ENCODE measurements at regions of chr3 and their contacts with region 1.

Region 1: DNA sequence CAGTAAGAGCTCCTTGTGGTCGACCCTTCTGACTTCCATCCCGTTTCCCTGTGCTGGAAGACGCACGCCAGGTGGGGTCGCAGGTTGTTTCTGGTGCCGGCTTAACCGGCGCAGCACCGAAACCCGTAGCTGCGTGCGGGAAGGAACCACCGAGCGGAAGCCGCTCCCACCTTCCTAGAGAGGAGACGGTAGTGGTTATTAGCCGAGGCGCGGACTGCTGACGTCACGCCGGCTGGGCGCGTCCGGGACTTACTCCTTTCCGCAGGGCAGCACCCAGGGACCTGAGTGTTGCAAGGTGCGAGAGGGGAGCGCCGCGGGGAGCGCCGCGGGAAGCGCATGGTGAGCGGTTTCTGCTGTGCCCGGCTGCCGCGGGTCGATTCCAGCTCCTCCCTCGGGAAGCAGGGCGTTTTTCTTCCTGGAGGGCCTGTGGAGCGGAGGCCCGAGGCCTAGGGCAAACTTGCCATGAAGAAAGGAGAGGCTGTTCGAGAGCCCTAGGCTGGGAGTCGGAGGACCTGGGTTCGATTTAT is at the start of gene ZNF501:
- DNase-seq: peak; percentile 96 to 98
- ATAC-seq: peak; percentile 98
- H3K4me3 ChIP-seq: peak within 1 kb of the TSS; percentile 76 to 89
- H3K27ac ChIP-seq: no peak within 1 kb of the TSS
- H3K4me1 ChIP-seq: no peaks in the 10 kb centered on the region
- H3K27me3 ChIP-seq: no peaks in the 10 kb centered on the region
- total RNA-seq, gene ZNF501: 4.6 to 7.3 TPM

Region 2: GRCh38 chr3:44712455-44713075 is 16.9 kb before region 1 on chr3 and contains the start of gene ZNF502:
- intact Hi-C with region 1: loop called in 1 of 2 experiments (anchors 2 kb)
- DNase-seq: peak; percentile 91 to 97
- ATAC-seq: peak; percentile 96
- H3K4me3 ChIP-seq: peak within 1 kb of the TSS; percentile 24 to 81
- H3K27ac ChIP-seq: peak within 1 kb of the TSS in 1 of 2 donors; percentile 13
- H3K4me1 ChIP-seq: peaks cover 0 to 5% of the 10 kb centered on the region in 2 donors
- H3K27me3 ChIP-seq: no peaks in the 10 kb centered on the region
- total RNA-seq, gene ZNF502: 5.1 to 5.9 TPM